Naive thymus-derived CD4-positive, alpha-beta T cell (primary cell): ENCODE measurements at regions of chr17 and their contacts with region 1.

Region 1: DNA sequence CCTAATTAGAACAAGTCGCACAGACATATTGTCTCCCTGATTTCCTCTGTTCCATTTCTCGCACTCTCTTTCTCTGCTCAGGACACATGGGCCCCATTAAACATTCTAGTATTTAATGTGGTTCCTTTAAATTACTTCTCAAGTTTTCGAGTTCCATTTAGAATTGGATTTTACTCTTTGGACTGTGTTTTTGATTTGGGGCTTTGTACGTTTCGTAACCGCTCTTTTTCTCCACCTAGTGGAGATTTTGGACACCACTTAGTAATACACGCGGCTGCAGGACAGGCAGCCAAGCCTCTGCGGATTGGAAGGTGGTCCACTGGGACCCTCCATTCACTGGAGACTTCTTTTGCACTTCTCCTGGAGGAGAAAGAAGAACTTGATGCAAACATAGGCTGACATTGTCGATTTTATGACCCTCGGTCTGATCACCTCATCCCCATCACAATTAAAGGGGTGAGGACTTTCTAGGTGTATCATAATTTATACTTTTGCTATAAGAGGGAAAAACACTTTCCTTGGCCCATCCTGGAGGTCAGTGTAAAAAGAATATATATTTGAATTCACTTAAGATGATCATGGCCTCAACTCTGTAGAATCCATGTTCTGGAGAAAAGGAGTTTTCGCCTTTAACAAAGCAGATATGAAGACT is 85.7 kb downstream of the NOG start:
- DNase-seq: peak in 5 of 9 donors; percentile 30 to 47 (median 40)
- ATAC-seq: peak; percentile 65
- H3K4me3 ChIP-seq: peak overlapping the region; percentile 40
- H3K4me3 Mint-ChIP-seq: peak overlapping the region in 9 of 10 donors; percentile 77 to 91 (median 86)
- H3K27ac ChIP-seq: no peak overlapping the region
- H3K27ac Mint-ChIP-seq: peak overlapping the region in 2 of 9 donors; percentile 9 to 10
- H3K4me1 ChIP-seq: peaks cover 19 to 20% of the 10 kb centered on the region in 2 donors
- H3K4me1 Mint-ChIP-seq: peaks cover 7 to 23% (median 17%) of the 10 kb centered on the region in 7 donors
- H3K27me3 ChIP-seq: no peaks in the 10 kb centered on the region
- H3K27me3 Mint-ChIP-seq: peaks cover 12 to 52% (median 31%) of the 10 kb centered on the region in 5 donors

Region 2: GRCh38 chr17:56499799-56500388 is 179.3 kb before region 1 on chr17:
- CTCF ChIA-PET with region 1: interaction called, 4 read pairs
- POLR2A ChIA-PET with region 1: no interaction called
- intact Hi-C with region 1: loop called in 1 of 2 experiments (anchors 1 kb)
- DNase-seq: peak in 7 of 9 donors; percentile 7 to 45 (median 32)
- ATAC-seq: no peak
- H3K4me3 ChIP-seq: no peak overlapping the region
- H3K4me3 Mint-ChIP-seq: no peak overlapping the region
- H3K27ac ChIP-seq: no peak overlapping the region
- H3K27ac Mint-ChIP-seq: no peak overlapping the region
- H3K4me1 ChIP-seq: no peaks in the 10 kb centered on the region
- H3K4me1 Mint-ChIP-seq: no peaks in the 10 kb centered on the region
- H3K27me3 ChIP-seq: no peaks in the 10 kb centered on the region
- H3K27me3 Mint-ChIP-seq: peaks cover 0 to 6% (median 0%) of the 10 kb centered on the region in 5 donors

Region 3: GRCh38 chr17:57535249-57535966 is 856.2 kb after region 1 on chr17:
- CTCF ChIA-PET with region 1: no interaction called
- POLR2A ChIA-PET with region 1: no interaction called
- intact Hi-C with region 1: no loop called
- DNase-seq: no peak
- ATAC-seq: no peak
- H3K4me3 ChIP-seq: no peak overlapping the region
- H3K4me3 Mint-ChIP-seq: no peak overlapping the region
- H3K27ac ChIP-seq: no peak overlapping the region
- H3K27ac Mint-ChIP-seq: peak overlapping the region in 4 of 9 donors; percentile 29 to 57 (median 47)
- H3K4me1 ChIP-seq: peaks cover 0 to 13% of the 10 kb centered on the region in 2 donors
- H3K4me1 Mint-ChIP-seq: peaks cover 28 to 68% (median 61%) of the 10 kb centered on the region in 7 donors
- H3K27me3 ChIP-seq: no peaks in the 10 kb centered on the region
- H3K27me3 Mint-ChIP-seq: no peaks in the 10 kb centered on the region